PC-3 (cell line): ENCODE measurements at regions of chr1 and their contacts with region 1.

Region 1: DNA sequence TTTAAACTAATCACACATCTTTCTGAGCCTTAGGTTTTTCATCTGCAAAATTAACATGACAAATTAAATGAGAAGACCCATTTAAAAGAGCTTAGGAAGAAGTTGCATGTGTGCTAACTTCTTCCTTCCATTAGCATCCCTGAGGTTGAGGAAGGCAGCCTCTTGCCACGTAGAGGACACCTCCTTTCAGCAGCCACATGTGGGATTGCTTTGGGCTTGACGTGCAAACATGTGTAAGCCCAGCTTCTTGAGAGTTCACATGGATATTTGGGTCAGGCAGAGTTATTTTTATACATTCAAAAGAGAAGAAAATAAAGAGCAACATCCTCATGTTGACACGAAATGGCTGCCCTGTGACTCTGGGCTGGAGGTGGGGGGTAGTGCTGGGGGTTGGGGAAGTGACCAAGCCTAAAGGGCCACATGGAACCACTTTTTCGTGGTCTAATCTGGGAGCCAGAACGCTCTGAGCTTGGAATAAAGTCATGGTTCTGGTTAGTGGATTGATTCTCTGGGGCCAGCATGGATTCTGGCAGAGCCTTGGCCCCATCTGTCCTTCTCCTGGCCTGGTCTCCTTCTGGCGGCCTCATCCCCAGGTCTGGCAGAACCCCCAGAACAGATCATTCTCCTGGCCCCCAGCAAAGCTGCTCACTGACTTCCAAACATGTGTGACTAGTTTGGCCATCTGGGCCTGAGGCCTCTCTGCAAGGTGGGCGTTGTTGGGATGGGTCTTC is 137.1 kb upstream of the USP24 start:
- DNase-seq: no peak
- ATAC-seq: no peak
- H3K4me3 ChIP-seq: no peak overlapping the region
- H3K27ac ChIP-seq: no peak overlapping the region
- H3K4me1 ChIP-seq: no peaks in the 10 kb centered on the region
- H3K27me3 ChIP-seq: no peaks in the 10 kb centered on the region
- CTCF ChIP-seq: no peak

Region 2: GRCh38 chr1:55310505-55310971 is 41.7 kb before region 1 on chr1:
- CTCF ChIA-PET with region 1: no interaction called
- POLR2A ChIA-PET with region 1: no interaction called
- intact Hi-C with region 1: no loop called
- DNase-seq: peak; percentile 96
- ATAC-seq: peak; percentile 98
- H3K4me3 ChIP-seq: peak overlapping the region; percentile 22; the same call in 1 of the 2 replicates
- H3K27ac ChIP-seq: peak overlapping the region; percentile 90
- H3K4me1 ChIP-seq: peaks cover 28% of the 10 kb centered on the region
- H3K27me3 ChIP-seq: no peaks in the 10 kb centered on the region
- CTCF ChIP-seq: no peak

Region 3: GRCh38 chr1:56456436-56457101 is 1104.3 kb after region 1 on chr1:
- CTCF ChIA-PET with region 1: interaction called, 10 read pairs
- POLR2A ChIA-PET with region 1: no interaction called
- intact Hi-C with region 1: no loop called
- DNase-seq: peak; percentile 81
- ATAC-seq: peak; percentile 89
- H3K4me3 ChIP-seq: no peak overlapping the region
- H3K27ac ChIP-seq: peak overlapping the region; percentile 69
- H3K4me1 ChIP-seq: peaks cover 13% of the 10 kb centered on the region
- H3K27me3 ChIP-seq: no peaks in the 10 kb centered on the region
- CTCF ChIP-seq: no peak